Right ventricle myocardium superior (tissue), 1 donor: ENCODE measurements at regions of chr13 and their contacts with region 1.

Region 1: DNA sequence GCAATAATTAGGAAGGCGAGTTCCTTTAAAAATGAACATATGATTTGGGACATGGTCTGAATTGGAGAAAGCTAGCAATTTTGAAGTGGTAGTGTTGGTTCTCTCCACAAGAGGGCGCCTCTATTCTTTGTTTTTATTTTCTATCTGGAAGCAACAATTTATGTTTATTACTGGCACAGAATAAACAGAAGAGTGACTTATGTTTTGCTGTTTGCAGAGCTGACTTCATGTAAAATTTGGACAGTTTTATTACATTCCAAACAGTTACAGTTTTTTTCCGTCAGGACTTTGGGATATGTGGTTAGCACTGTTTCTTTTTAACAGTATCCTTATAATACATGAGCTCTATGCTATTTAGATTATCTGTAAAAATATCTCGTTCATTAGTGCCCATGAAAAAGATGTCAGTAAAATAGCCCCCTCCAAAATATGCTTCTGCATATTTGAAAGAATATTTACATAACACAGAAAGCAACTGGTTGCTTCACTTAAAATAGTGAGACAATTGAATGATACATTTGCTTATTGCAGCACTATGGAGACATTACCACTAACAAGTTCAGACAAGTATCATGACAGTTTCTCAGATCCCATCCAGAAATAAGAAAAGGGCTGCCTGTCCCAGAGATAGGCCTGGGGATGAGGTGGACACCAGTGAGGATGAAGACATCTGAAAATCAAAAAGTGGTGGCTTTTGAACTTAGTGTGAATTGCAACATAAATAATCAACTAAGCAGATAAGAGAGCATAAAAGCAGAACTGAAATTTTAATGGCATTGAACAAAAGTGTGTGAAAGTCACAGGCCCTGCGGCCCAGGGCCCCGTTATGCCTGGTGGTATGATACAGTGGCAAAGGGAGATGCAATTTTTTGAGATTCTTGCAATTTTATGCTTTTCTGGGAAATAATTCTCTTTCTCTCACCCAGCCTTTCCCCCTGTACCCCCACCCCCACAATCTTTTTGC is 32.3 kb upstream of the FGF9 start:
- DNase-seq: no peak
- ATAC-seq: no peak

Region 2: DNA sequence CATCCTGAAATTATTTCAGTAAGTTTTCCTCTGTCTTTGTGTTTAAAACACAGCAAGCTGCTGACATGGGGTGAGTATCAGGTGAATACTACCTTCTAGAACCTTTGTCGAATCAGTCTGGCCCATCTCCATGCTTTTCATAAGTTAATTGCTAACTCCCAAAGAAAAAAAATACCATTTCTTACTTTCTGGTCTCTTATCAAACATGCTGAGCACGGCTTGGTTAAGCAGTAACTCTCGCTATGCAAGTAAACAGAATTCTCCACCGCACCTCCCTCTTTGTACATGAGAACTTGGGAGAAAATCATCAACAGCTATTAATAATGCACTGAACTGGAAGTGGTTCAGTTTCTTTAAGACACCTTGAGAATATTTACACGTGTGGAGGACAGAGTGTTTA is 120.9 kb after region 1 on chr13:
- intact Hi-C with region 1: no loop called
- DNase-seq: no peak
- ATAC-seq: no peak

Region 3: GRCh38 chr13:22757530-22758120 is 1119.0 kb after region 1 on chr13:
- intact Hi-C with region 1: loop called (anchors 10 kb)
- DNase-seq: no peak
- ATAC-seq: no peak